PC-9 (cell line): ENCODE measurements at regions of chr6 and their contacts with region 1.

Region 1: DNA sequence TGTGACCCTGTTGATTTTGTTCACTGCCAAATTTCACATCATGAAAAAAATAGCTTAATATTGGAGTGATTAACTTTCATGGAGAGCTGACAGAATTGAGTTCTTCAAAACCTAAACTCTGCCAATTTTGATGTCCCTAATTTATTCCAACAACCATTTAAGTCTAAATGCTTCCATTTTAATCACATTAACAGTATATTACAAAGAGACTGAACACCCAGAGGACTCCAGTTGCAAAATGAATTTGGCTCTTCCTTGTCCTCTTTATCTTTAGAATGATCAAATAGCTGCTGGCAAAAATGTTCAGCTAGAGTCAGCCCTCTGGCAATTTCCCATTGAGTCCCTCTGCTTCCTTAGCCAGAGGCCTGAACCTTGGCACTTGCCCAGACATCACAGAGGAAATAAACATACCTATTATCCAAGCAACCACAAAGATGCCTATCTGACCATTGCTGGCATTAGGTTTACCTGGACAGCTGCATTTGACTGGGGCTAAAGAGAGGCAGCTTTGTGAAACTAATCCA is 299.0 kb upstream of the STXBP5 start:
- DNase-seq: peak; percentile 80 to 98
- H3K4me3 ChIP-seq: no peak overlapping the region
- H3K27ac ChIP-seq: no peak overlapping the region
- H3K4me1 ChIP-seq: peaks cover 18% of the 10 kb centered on the region
- H3K27me3 ChIP-seq: no peaks in the 10 kb centered on the region
- CTCF ChIP-seq: no peak

Region 2: DNA sequence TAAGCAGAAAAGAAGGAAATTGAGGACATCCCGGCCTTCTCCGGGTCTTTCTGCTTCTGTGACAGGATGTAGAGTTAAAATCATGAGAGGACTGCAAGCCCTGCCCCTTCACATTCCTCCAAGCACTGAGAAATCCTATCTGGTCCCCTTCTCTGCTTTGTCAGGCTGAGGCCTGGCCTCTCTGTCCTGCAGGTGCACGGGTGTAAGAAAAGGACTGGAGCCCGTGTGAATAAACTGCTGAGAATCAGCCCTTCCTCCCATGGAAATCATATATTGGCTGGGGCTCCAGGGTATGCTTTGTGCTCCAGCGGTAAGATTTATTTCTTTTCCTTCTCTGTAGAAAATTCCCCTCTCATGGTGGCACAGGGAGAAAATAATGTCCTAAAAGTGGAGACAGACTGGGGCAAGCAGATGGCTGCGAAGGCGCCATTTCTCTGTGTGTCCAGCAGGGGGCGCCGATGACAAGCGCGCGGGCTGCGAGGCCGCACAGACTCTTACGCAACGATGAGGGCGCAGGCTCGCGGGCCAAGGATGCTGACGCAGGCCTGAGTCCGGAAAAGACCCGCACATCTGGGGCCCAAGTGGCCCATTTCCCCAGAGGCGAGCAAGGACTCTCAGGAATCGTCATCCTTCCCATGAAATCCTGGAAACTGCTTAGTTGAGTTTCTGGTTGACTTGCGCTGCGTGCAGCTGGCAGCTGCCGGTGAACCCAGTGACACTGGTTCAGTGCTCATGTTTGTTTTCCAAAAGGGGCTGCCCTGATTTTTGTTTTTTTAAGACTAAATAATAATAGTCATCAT is 47.9 kb before region 1 on chr6:
- CTCF ChIA-PET with region 1: no interaction called
- POLR2A ChIA-PET with region 1: no interaction called
- intact Hi-C with region 1: no loop called
- DNase-seq: peak in 1 of 2 experiments; percentile 46
- H3K4me3 ChIP-seq: peak overlapping the region; percentile 26; the same call in 1 of the 2 replicates
- H3K27ac ChIP-seq: no peak overlapping the region
- H3K4me1 ChIP-seq: no peaks in the 10 kb centered on the region
- H3K27me3 ChIP-seq: no peaks in the 10 kb centered on the region
- CTCF ChIP-seq: peak; percentile 98

Region 3: DNA sequence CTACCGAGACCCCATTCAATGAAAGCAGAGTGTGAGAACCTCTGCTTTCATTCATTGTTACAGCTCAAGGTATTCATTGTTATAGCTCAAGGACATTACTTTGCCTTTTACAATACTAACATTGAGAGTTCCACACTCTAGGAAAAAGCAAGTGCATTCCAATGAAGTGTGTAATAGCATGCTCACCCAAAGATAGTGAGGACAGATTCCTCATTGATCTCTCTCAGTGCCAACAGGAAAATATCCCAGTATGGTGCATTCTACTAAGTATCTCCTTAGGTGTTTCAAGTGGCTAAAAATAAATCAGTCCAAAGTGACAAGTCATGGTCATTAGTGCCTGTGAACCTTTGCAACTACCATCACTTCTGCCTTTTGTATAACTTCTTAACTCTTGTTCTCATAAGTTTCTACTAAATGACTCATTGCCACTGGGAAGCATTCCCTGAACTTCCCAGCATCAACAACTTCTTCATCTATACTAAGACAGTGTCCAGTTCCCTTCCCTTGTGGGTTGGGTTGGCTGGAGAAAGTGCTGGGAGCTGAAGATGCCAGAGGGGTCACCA is 158.3 kb after region 1 on chr6:
- CTCF ChIA-PET with region 1: no interaction called
- POLR2A ChIA-PET with region 1: interaction called, 3 read pairs
- intact Hi-C with region 1: loop called (anchors 5 kb)
- DNase-seq: peak in 1 of 2 experiments; percentile 82
- H3K4me3 ChIP-seq: no peak overlapping the region
- H3K27ac ChIP-seq: peak overlapping the region; percentile 58
- H3K4me1 ChIP-seq: peaks cover 33% of the 10 kb centered on the region
- H3K27me3 ChIP-seq: no peaks in the 10 kb centered on the region
- CTCF ChIP-seq: no peak

Region 4: GRCh38 chr6:147202516-147203312 is 297.5 kb after region 1 on chr6:
- CTCF ChIA-PET with region 1: no interaction called
- POLR2A ChIA-PET with region 1: no interaction called
- intact Hi-C with region 1: loop called (anchors 1 kb)
- DNase-seq: peak; percentile 63 to 86
- H3K4me3 ChIP-seq: peak overlapping the region; percentile 77
- H3K27ac ChIP-seq: no peak overlapping the region
- H3K4me1 ChIP-seq: peaks cover 29% of the 10 kb centered on the region
- H3K27me3 ChIP-seq: no peaks in the 10 kb centered on the region
- CTCF ChIP-seq: no peak

Region 5: DNA sequence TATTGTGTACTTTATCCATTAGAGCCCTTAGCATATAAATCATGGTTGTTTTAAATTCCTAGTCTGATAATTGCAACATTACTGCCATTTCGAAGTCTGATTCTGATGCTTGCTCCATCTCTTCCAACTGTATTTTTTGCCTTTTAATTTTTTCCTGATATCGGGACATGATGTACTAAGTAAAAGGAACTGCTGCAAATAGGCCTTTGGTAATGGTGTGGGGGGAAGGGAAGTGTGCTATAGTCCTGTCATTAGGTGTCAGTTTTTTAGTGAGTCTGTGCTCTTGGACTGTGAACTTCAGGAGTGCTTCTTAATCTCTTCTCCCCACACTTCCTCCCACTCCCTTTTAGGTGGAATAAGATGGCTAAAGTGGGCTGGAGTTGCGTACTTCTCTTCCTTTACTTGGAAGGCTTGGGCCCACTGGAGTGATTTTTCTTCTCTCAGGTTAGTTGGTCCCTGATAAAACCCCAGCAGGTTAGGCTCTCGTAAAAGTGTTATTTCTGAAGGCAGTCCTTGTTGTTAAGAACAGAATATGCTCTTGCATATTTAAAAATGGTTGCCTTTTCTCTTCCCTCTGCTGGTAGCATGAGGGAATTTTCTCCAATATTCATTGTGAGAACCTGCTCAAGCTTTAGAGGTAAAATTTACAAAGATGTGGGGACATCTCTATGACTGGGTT is 317.1 kb after region 1 on chr6:
- CTCF ChIA-PET with region 1: no interaction called
- POLR2A ChIA-PET with region 1: no interaction called
- intact Hi-C with region 1: loop called (anchors 1 kb)
- DNase-seq: no peak
- H3K4me3 ChIP-seq: no peak overlapping the region
- H3K27ac ChIP-seq: no peak overlapping the region
- H3K4me1 ChIP-seq: no peaks in the 10 kb centered on the region
- H3K27me3 ChIP-seq: no peaks in the 10 kb centered on the region
- CTCF ChIP-seq: peak; percentile 63

Region 6: GRCh38 chr6:147285087-147285855 is 380.0 kb after region 1 on chr6:
- CTCF ChIA-PET with region 1: interaction called, 15 read pairs
- POLR2A ChIA-PET with region 1: no interaction called
- intact Hi-C with region 1: loop called (anchors 5 kb)
- DNase-seq: no peak
- H3K4me3 ChIP-seq: no peak overlapping the region
- H3K27ac ChIP-seq: no peak overlapping the region
- H3K4me1 ChIP-seq: peaks cover 11% of the 10 kb centered on the region
- H3K27me3 ChIP-seq: no peaks in the 10 kb centered on the region
- CTCF ChIP-seq: peak; percentile 57

Region 7: DNA sequence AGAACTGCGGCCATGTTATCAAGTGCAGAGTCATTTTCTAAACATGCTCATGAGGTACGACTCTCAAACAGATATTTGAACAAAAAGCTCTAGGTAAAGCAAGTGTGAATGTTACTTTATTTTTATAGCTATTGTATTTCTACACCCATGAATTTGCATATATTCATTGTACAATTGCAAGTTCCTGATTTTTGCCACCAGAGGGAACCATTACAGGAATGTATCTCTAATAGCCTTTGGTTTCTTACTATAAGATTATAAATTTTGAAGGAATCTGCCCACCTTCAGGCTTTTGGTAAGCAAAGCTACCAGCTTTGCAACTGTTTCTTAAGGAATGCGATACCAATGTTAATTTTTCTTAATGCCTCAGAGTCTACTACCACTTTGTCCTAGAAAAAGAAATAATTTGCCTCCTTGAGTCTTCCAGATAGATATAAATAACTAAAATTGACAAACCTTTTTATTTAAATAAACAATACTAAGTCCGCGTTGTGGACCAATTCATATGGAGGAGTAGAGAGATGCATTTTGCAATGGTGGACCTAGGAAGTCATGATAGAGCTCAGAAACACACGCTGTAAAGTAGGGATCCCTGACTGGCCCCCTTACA is 477.8 kb after region 1 on chr6:
- CTCF ChIA-PET with region 1: no interaction called
- POLR2A ChIA-PET with region 1: no interaction called
- intact Hi-C with region 1: loop called (anchors 5 kb)
- DNase-seq: peak in 1 of 2 experiments; percentile 35
- H3K4me3 ChIP-seq: no peak overlapping the region
- H3K27ac ChIP-seq: no peak overlapping the region
- H3K4me1 ChIP-seq: no peaks in the 10 kb centered on the region
- H3K27me3 ChIP-seq: no peaks in the 10 kb centered on the region
- CTCF ChIP-seq: peak; percentile 68

Region 8: DNA sequence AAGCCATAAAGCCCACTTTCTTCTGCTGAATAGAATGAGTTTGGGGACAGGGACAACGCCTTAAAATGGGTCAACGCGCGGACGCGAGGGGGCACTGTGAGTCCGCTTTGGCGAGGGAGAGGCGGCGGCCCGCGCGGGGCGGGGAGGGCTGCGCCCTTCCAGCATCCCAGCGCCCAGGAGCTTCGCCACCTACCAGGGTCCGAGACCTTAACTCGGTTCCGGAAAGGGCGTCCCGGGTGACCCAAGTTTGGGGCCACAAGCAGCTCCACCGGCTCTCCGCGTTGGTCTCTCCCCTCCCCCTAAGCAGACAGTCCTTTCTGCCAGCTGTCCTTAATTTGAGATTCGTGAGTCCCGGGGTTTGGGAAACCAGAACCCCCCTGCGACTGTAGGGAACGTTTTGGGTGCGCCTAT is 601.5 kb after region 1 on chr6:
- CTCF ChIA-PET with region 1: no interaction called
- POLR2A ChIA-PET with region 1: no interaction called
- intact Hi-C with region 1: loop called (anchors 2 kb)
- DNase-seq: peak in 1 of 2 experiments; percentile 53
- H3K4me3 ChIP-seq: peak overlapping the region; percentile 87
- H3K27ac ChIP-seq: no peak overlapping the region
- H3K4me1 ChIP-seq: peaks cover 6% of the 10 kb centered on the region; the same call in 1 of the 2 replicates
- H3K27me3 ChIP-seq: no peaks in the 10 kb centered on the region
- CTCF ChIP-seq: peak; percentile 87